ENCODE measurements at regions of chr1 and their contacts with region 1.

Region 1: DNA sequence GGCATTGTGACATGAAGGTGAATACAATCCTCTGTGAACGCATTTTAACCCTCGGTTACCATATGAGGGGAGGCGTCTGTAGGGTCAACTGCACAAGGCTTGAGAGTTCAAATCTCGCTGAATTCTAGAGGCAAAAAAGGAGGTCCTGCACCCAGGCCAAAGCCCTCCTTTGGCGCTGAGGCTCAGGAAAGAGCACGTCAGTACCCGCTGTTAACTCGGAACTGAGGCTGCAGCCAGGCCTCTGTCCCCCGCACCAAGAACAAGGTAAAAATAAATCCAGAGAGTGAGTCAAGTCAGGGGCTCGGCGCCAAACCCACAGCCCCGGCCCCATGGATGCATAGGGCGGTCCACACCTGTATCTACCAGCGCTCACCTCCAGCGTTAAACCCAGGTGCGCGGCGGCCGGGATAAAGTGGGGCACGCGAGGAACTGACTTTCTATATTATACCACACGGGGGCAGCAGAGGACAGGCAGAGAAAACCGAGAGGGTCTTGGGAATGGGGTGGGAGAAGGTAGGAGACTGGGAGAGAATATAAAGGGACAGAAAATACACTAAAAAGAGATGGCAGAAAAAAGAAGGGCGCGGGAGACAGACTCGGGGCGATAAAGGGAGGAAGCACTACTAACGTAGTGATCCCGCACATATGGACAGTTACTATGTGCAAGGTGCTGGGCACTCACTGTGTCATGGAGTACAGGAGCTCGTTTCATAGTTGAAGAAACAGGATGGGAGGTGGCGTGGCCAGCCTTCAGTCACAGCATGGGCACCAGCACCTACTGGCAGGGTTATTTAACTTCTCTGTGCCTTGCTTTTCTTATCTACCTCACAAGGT is 54.8 kb downstream of the DMRTA2 start:
- DNase-seq: peak in 7 of 9 experiments; percentile 1 to 40 (median 26)
- ATAC-seq: no peak
- H3K4me3 ChIP-seq: no peak overlapping the region
- H3K4me3 Mint-ChIP-seq: no peak overlapping the region
- H3K27ac ChIP-seq: no peak overlapping the region
- H3K27ac Mint-ChIP-seq: no peak overlapping the region
- H3K4me1 ChIP-seq: no peaks in the 10 kb centered on the region
- H3K4me1 Mint-ChIP-seq: no peaks in the 10 kb centered on the region
- H3K27me3 ChIP-seq: peaks cover 3 to 5% of the 10 kb centered on the region in 2 experiments
- H3K27me3 Mint-ChIP-seq: peaks cover 38% of the 10 kb centered on the region
- CTCF ChIP-seq: peak; percentile 67

Region 2: GRCh38 chr1:50181027-50181663 is 187.3 kb before region 1 on chr1:
- CTCF ChIA-PET with region 1: no interaction called
- POLR2A ChIA-PET with region 1: no interaction called
- intact Hi-C with region 1: no loop called
- DNase-seq: no peak
- ATAC-seq: no peak
- H3K4me3 ChIP-seq: no peak overlapping the region
- H3K4me3 Mint-ChIP-seq: no peak overlapping the region
- H3K27ac ChIP-seq: no peak overlapping the region
- H3K27ac Mint-ChIP-seq: no peak overlapping the region
- H3K4me1 ChIP-seq: no peaks in the 10 kb centered on the region
- H3K4me1 Mint-ChIP-seq: no peaks in the 10 kb centered on the region
- H3K27me3 ChIP-seq: no peaks in the 10 kb centered on the region
- H3K27me3 Mint-ChIP-seq: peaks cover 14% of the 10 kb centered on the region
- CTCF ChIP-seq: no peak

Region 3: DNA sequence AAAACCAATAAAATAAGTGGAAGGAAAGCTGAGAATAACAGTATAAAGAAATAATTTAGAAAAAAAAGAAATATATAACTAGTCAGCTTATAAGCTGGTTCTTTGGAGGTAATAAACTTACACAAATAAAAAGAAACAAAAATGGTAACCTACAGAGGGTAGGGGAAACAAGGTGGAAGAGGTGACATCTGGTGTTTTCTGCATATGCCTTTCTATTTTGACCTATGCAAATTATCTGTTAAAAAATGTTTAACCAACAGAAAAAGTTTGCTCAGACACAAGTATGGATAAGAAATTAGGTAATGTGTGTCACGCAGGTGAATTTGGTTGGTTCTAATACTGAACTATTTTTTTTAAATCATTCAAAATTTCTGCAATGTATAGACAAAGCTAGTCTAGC is 108.4 kb after region 1 on chr1:
- CTCF ChIA-PET with region 1: no interaction called
- POLR2A ChIA-PET with region 1: no interaction called
- intact Hi-C with region 1: no loop called
- DNase-seq: no peak
- ATAC-seq: no peak
- H3K4me3 ChIP-seq: no peak overlapping the region
- H3K4me3 Mint-ChIP-seq: no peak overlapping the region
- H3K27ac ChIP-seq: no peak overlapping the region
- H3K27ac Mint-ChIP-seq: no peak overlapping the region
- H3K4me1 ChIP-seq: no peaks in the 10 kb centered on the region
- H3K4me1 Mint-ChIP-seq: no peaks in the 10 kb centered on the region
- H3K27me3 ChIP-seq: no peaks in the 10 kb centered on the region
- H3K27me3 Mint-ChIP-seq: no peaks in the 10 kb centered on the region
- CTCF ChIP-seq: no peak

Region 4: GRCh38 chr1:50605186-50605875 is 236.9 kb after region 1 on chr1:
- CTCF ChIA-PET with region 1: no interaction called
- POLR2A ChIA-PET with region 1: no interaction called
- intact Hi-C with region 1: loop called in 1 of 2 experiments (anchors 10 kb)
- DNase-seq: peak in 2 of 9 experiments; percentile 14 to 17
- ATAC-seq: no peak
- H3K4me3 ChIP-seq: no peak overlapping the region
- H3K4me3 Mint-ChIP-seq: no peak overlapping the region
- H3K27ac ChIP-seq: no peak overlapping the region
- H3K27ac Mint-ChIP-seq: no peak overlapping the region
- H3K4me1 ChIP-seq: no peaks in the 10 kb centered on the region
- H3K4me1 Mint-ChIP-seq: no peaks in the 10 kb centered on the region
- H3K27me3 ChIP-seq: no peaks in the 10 kb centered on the region
- H3K27me3 Mint-ChIP-seq: no peaks in the 10 kb centered on the region
- CTCF ChIP-seq: no peak

Region 5: GRCh38 chr1:50735443-50735842 is 367.0 kb after region 1 on chr1:
- CTCF ChIA-PET with region 1: no interaction called
- POLR2A ChIA-PET with region 1: no interaction called
- intact Hi-C with region 1: loop called in 1 of 2 experiments (anchors 10 kb)
- DNase-seq: peak in 2 of 9 experiments; percentile 14 to 17
- ATAC-seq: no peak
- H3K4me3 ChIP-seq: no peak overlapping the region
- H3K4me3 Mint-ChIP-seq: no peak overlapping the region
- H3K27ac ChIP-seq: no peak overlapping the region
- H3K27ac Mint-ChIP-seq: no peak overlapping the region
- H3K4me1 ChIP-seq: no peaks in the 10 kb centered on the region
- H3K4me1 Mint-ChIP-seq: peaks cover 6% of the 10 kb centered on the region
- H3K27me3 ChIP-seq: no peaks in the 10 kb centered on the region
- H3K27me3 Mint-ChIP-seq: no peaks in the 10 kb centered on the region
- CTCF ChIP-seq: peak; percentile 32

Measured in CD8-positive, alpha-beta T cell (primary cell).